ENCODE measurements at regions of chr1 and their contacts with region 1.

Region 1: GRCh38 chr1:25487628-25488027 is 55.8 kb upstream of the LDLRAP1 start:
- DNase-seq: peak; percentile 37
- H3K4me3 ChIP-seq: no peak overlapping the region; a peak in 1 of 4 replicates
- H3K27ac ChIP-seq: no peak overlapping the region
- H3K4me1 ChIP-seq: no peaks in the 10 kb centered on the region; a peak in 2 of 4 replicates
- H3K27me3 ChIP-seq: no peaks in the 10 kb centered on the region
- CTCF ChIP-seq: peak; percentile 69
- EP300 ChIP-seq: no peak
- RAD21 ChIP-seq: peak; percentile 15; the same call in 1 of the 2 replicates

Region 2: GRCh38 chr1:25503551-25504426 is 16.2 kb after region 1 on chr1:
- CTCF ChIA-PET with region 1: interaction called, 12 read pairs
- POLR2A ChIA-PET with region 1: no interaction called
- DNase-seq: peak; percentile 63
- H3K4me3 ChIP-seq: no peak overlapping the region
- H3K27ac ChIP-seq: peak overlapping the region; percentile 40 to 55
- H3K4me1 ChIP-seq: peaks cover 15 to 22% of the 10 kb centered on the region in 2 experiments; a peak in 3 of 4 replicates
- H3K27me3 ChIP-seq: no peaks in the 10 kb centered on the region
- CTCF ChIP-seq: peak; percentile 48
- EP300 ChIP-seq: no peak
- RAD21 ChIP-seq: peak; percentile 54

Measured in SK-N-SH (cell line).